Activated CD4-positive, alpha-beta T cell treated with anti-CD3 and anti-CD28 coated beads for 36 hours (primary cell): ENCODE measurements at regions of chr12 and their contacts with region 1.

Region 1: DNA sequence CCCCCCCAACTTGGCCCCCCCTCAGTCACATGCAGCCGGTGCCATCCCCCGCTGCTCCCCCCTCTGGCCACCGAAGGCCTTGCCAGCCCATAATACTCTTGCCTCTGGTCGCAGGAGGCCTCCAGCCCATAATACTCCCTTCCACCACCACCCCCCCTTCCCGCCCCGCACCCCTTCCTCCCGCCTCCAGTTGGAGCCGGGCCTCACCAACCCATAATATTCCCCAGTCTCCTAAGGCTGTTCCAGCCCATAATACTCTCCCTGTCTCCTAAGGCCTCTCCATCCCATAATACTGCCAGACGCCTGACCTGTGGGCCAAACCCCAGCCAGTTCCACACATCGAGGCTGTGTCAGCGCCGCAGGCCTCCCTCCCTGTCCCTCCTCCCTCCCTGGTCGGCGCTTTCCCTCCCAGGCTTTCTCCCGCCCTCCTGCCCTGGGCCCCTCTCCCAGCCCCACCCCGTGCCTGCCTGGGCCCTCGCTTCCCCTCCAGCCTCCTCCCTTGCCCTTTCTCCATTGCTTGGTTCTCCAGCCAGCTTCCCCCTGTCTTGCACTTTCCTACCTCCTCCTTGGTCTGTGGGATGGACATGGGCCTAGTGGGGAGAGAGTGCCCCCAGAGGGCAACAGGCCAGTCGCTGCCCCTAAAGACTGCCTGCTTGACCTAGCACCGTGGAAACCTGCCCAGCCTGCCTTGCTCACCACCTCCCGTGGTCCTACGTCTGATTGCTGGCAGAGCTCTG is 6.8 kb upstream of the CHD4 start:
- DNase-seq: peak; percentile 51
- ATAC-seq: peak; percentile 30
- H3K4me3 Mint-ChIP-seq: no peak overlapping the region
- H3K27ac Mint-ChIP-seq: peak overlapping the region; percentile 10
- H3K4me1 Mint-ChIP-seq: peaks cover 41% of the 10 kb centered on the region
- H3K27me3 Mint-ChIP-seq: no peaks in the 10 kb centered on the region

Region 2: GRCh38 chr12:6632026-6632983 is 18.4 kb after region 1 on chr12:
- CTCF ChIA-PET with region 1: interaction called, 41 read pairs
- POLR2A ChIA-PET with region 1: no interaction called
- intact Hi-C with region 1: loop called in 1 of 2 experiments (anchors 2 kb)
- DNase-seq: peak; percentile 69
- ATAC-seq: peak; percentile 68
- H3K4me3 Mint-ChIP-seq: peak overlapping the region; percentile 71
- H3K27ac Mint-ChIP-seq: peak overlapping the region; percentile 99
- H3K4me1 Mint-ChIP-seq: peaks cover 59% of the 10 kb centered on the region
- H3K27me3 Mint-ChIP-seq: no peaks in the 10 kb centered on the region

Region 3: GRCh38 chr12:6662906-6663742 is 49.2 kb after region 1 on chr12 and contains the start of gene ING4:
- CTCF ChIA-PET with region 1: interaction called, 3 read pairs
- POLR2A ChIA-PET with region 1: interaction called, 8 read pairs
- intact Hi-C with region 1: loop called (anchors 2 kb)
- DNase-seq: peak; percentile 98
- ATAC-seq: peak; percentile 98
- H3K4me3 Mint-ChIP-seq: peak within 1 kb of the TSS; percentile 84
- H3K27ac Mint-ChIP-seq: peak within 1 kb of the TSS; percentile 91
- H3K4me1 Mint-ChIP-seq: peaks cover 24% of the 10 kb centered on the region
- H3K27me3 Mint-ChIP-seq: no peaks in the 10 kb centered on the region
- total RNA-seq, gene ING4: 14.9 to 17.6 TPM

Region 4: DNA sequence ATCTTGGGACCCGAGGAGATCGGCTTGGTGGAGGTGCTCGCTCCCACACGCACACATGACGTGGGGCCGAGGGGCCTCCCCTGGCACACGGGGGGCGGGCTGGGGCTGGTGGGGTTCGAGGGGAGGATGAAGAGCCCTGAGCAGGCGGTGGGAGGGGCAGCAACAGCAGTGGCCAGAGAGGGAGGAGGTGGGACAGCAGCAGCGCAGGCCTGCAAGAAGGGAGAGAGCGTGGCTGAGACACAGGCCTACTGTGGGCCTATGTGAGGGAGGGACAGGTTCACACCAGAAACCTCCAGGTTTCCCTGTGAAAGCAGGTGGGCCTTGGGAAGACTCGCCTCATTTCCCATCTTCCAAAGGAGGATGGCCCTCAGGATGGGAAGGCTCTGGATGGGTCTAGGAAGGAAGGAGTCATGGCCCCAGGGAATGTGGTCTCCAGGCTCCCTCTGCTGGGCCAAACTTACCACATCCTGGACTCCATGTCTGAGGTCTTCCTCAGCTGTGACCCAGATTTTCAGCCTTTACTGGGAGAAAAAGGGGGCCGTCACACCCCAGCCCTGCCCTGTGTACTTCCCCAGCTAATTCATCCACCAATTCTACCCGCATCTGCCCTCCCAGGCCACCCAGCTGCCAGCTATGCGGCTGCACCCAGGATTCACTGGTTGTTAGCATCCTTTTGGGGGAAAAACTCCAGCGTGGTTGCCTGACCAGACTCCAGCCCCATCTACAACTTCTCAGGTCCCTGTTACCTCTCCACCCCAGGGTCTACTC is 83.8 kb after region 1 on chr12:
- CTCF ChIA-PET with region 1: interaction called, 4 read pairs
- POLR2A ChIA-PET with region 1: no interaction called
- intact Hi-C with region 1: loop called in 1 of 2 experiments (anchors 1 kb)
- DNase-seq: peak; percentile 51
- ATAC-seq: no peak
- H3K4me3 Mint-ChIP-seq: no peak overlapping the region
- H3K27ac Mint-ChIP-seq: no peak overlapping the region
- H3K4me1 Mint-ChIP-seq: peaks cover 10% of the 10 kb centered on the region
- H3K27me3 Mint-ChIP-seq: peaks cover 29% of the 10 kb centered on the region

Region 5: DNA sequence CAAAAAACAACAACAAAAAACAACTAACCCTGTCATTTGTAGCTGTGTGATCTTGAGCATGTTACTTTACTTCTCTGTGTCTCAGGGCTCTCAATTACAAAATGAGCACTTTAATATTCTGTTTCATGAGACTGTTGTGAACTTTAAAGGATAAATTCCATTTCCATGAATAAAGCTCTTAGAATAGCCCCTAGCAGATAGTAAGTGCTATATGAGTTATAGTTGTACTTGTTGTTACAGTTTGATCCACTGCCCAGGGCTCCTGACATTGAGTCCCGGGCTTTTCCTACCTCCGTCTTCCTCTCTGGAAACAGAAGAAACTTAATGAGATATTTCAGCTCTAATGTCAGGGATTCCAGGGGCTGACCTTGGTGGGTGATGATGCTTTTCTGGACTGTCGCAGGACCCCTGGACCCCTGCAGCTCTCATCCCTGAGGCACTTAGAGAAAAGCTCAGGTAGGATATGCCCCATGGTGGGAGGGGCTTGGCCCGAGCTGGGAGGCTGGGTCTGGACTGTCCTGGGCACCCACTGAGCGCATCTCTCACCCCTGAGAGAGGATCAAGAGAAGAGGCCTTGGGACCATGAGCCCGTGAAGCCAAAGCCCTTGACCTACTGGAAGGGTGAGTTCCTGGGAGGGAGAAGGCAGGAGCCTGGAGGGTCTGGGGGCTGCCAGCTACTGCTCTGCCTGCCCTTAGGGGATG is 219.4 kb after region 1 on chr12:
- CTCF ChIA-PET with region 1: interaction called, 3 read pairs
- POLR2A ChIA-PET with region 1: no interaction called
- intact Hi-C with region 1: loop called in 1 of 2 experiments (anchors 1 kb)
- DNase-seq: no peak
- ATAC-seq: no peak
- H3K4me3 Mint-ChIP-seq: no peak overlapping the region
- H3K27ac Mint-ChIP-seq: no peak overlapping the region
- H3K4me1 Mint-ChIP-seq: peaks cover 13% of the 10 kb centered on the region
- H3K27me3 Mint-ChIP-seq: peaks cover 7% of the 10 kb centered on the region